Ascending aorta (tissue), 2 donors: ENCODE measurements at regions of chr11 and their contacts with region 1.

Region 1: GRCh38 chr11:8964324-8965320 is at the start of gene TMEM9B:
- DNase-seq: peak; percentile 61 to 95
- H3K4me3 ChIP-seq: peak within 1 kb of the TSS; percentile 83 to 88
- H3K27ac ChIP-seq: peak within 1 kb of the TSS; percentile 95 to 97
- H3K4me1 ChIP-seq: peaks cover 0 to 12% of the 10 kb centered on the region in 2 donors
- H3K27me3 ChIP-seq: no peaks in the 10 kb centered on the region
- CTCF ChIP-seq: no peak
- total RNA-seq, gene TMEM9B: 42.4 TPM

Region 2: GRCh38 chr11:8682303-8683114 is 282.1 kb before region 1 on chr11 and contains the starts of genes RPL27A and TRIM66:
- intact Hi-C with region 1: loop called (anchors 5 kb)
- DNase-seq: peak; percentile 91 to 99
- H3K4me3 ChIP-seq: peak within 1 kb of the TSS; percentile 65 to 86
- H3K27ac ChIP-seq: peak within 1 kb of the TSS; percentile 81 to 97
- H3K4me1 ChIP-seq: peaks cover 0 to 16% of the 10 kb centered on the region in 2 donors
- H3K27me3 ChIP-seq: no peaks in the 10 kb centered on the region
- CTCF ChIP-seq: peak in 2 of 3 experiments; percentile 8 to 11
- total RNA-seq, gene RPL27A: 789 TPM
- total RNA-seq, gene TRIM66: 3.9 TPM

Region 3: DNA sequence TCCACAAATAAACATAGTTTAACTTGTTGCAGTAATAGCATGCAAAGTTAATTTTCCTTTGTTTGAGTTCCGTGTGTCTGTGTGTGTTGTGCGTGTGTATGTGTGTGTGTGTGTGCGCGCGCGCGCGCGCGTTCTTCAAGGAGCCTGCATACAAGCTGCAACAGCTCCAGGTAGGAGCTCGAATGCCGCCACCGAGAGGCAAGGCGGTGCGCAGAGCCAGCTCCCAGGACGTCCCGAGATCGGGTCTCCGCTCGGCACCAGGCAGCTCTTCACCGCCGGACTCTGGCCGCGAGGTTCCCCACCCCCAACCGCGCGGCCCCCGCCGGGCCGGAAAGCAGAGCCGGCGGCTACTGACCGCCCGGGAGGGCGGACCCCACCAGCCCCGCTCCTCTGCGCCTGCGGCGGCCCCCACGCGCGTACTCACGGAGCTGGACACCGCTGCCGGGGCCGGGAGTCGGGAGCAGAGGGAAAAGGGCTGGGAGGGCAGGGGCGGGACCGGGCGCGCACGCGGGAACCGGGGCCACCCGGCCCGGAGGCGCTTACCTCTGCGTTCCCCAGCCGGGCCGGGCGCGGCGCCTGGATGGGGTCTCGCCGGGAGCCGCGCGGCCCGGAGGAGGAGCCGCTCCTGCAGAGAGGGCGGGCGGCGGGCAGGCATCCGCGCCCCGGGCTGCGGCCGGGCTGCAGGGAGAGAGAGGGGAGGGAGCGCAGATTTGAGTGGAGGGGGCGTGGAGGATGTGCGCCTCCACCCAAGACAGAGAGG is 94.0 kb before region 1 on chr11:
- intact Hi-C with region 1: loop called (anchors 5 kb)
- DNase-seq: peak in 1 of 2 donors; percentile 64
- H3K4me3 ChIP-seq: peak overlapping the region; percentile 75 to 90
- H3K27ac ChIP-seq: peak overlapping the region; percentile 36 to 70
- H3K4me1 ChIP-seq: peaks cover 0 to 2% of the 10 kb centered on the region in 2 donors
- H3K27me3 ChIP-seq: no peaks in the 10 kb centered on the region
- CTCF ChIP-seq: no peak

Region 4: DNA sequence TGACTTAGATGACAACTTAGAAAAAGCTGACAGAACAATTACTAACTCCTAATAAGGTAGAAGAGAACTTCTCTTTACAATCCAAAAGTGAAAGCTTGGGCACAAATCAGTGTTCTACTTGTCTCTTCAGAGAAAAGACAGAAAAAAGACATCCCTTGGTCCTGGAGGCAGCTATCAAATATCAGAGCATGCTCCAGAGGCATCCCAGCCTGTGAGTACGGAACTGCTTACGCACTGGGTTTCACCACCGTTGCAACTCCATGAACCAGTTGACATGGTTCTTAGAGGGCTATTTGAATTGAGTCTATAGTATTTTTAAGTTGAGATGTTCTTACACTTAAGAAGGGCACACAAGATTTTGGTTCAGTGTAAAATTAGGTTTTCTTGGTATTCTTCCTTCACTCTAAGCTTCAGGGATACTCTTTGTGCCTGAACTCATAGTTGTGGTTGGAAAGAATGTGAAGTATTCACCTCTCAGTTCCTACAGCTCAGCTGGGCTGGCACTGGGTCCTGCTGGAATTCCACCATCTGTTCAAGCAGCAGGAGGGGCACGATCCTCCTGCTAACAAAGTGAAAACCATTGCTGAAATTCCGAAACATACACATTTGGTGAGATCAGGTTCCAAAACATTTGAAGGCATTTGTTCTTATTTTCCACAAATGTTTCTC is 47.3 kb before region 1 on chr11:
- intact Hi-C with region 1: loop called (anchors 2 kb)
- DNase-seq: peak in 1 of 2 donors; percentile 73
- H3K4me3 ChIP-seq: peak overlapping the region; percentile 4 to 44
- H3K27ac ChIP-seq: peak overlapping the region; percentile 80
- H3K4me1 ChIP-seq: peaks cover 7 to 28% of the 10 kb centered on the region in 2 donors
- H3K27me3 ChIP-seq: no peaks in the 10 kb centered on the region
- CTCF ChIP-seq: no peak

Region 5: GRCh38 chr11:8948886-8949285 is 15.7 kb before region 1 on chr11:
- intact Hi-C with region 1: no loop called
- DNase-seq: no peak
- H3K4me3 ChIP-seq: no peak overlapping the region
- H3K27ac ChIP-seq: no peak overlapping the region
- H3K4me1 ChIP-seq: no peaks in the 10 kb centered on the region
- H3K27me3 ChIP-seq: no peaks in the 10 kb centered on the region
- CTCF ChIP-seq: no peak

Region 6: GRCh38 chr11:9137293-9138132 is 172.9 kb after region 1 on chr11:
- intact Hi-C with region 1: loop called (anchors 5 kb)
- DNase-seq: peak in 1 of 2 donors; percentile 86
- H3K4me3 ChIP-seq: no peak overlapping the region
- H3K27ac ChIP-seq: peak overlapping the region; percentile 58 to 67
- H3K4me1 ChIP-seq: peaks cover 7 to 19% of the 10 kb centered on the region in 2 donors
- H3K27me3 ChIP-seq: no peaks in the 10 kb centered on the region
- CTCF ChIP-seq: peak; percentile 87 to 98 (median 92)